CD4-positive, alpha-beta memory T cell (primary cell): ENCODE measurements at regions of chr12 and their contacts with region 1.

Region 1: DNA sequence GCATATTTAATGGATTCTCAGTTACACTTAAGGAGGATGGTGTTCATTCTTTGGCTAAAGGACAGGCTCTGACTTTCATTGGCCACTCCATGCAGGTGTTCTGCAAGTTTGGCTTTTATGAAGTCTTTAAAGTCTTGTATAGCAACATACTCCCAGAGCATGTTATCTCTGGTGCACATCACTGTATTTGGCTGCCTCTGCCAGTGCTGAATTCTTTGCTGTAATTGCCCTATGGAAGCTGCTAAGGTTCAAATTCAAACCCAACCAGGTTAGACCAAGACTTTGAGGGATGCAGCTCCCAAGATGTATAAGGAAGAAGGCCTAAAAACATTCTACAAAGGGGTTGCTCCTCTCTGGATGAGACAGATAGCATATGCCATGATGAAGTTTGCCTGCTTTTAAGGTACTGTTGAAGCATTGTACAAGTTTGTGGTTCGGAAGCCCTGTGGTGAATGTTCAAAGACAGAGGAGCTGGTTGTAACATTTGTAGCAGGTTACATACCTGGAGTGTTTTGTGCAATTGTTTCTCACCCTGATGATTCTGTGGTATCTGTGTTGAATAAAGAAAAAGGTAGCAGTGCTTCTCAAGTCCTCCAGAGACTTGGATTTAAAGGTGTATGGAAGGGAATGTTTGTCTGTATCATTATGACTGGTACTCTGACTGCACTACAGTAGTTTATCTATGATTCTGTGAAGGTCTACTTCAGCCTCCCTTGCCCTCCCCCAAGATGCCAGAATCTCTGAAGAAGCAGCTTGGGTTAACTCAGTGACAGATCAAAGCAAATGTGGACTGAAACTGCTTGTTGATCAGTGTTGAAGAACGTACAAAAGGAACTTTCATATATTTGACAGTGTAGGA is 19.4 kb downstream of the TMEM116 start:
- DNase-seq: peak; percentile 63 to 71 (median 67)
- H3K4me3 ChIP-seq: peak overlapping the region in 1 of 2 donors; percentile 55
- H3K4me3 Mint-ChIP-seq: peak overlapping the region; percentile 87 to 96 (median 92)
- H3K27ac ChIP-seq: peak overlapping the region; percentile 52
- H3K27ac Mint-ChIP-seq: peak overlapping the region; percentile 80 to 97 (median 92)
- H3K4me1 ChIP-seq: peaks cover 83% of the 10 kb centered on the region
- H3K4me1 Mint-ChIP-seq: peaks cover 50 to 88% (median 66%) of the 10 kb centered on the region in 4 donors
- H3K27me3 ChIP-seq: no peaks in the 10 kb centered on the region
- H3K27me3 Mint-ChIP-seq: no peaks in the 10 kb centered on the region

Region 2: DNA sequence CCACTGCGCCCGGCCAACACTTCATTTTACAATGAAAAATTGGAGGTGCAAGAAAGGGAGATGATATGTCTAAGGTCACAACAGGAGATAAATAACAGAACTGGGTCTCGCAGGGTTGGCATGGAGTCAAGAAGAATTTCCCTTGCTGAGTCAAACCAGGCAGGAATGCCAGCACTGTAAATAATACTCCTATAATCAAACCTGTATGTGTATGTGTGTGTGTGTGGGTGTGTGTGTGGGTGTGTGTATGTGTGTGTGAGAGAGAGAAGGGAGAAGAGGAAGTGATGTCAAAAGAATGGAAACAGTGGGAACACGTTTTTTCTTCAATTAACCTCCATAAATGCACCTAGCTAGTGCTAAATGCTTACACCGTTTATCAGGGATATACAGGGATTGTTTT is 51.0 kb before region 1 on chr12:
- CTCF ChIA-PET with region 1: interaction called, 6 read pairs
- POLR2A ChIA-PET with region 1: interaction called, 3 read pairs
- intact Hi-C with region 1: loop called (anchors 1 kb)
- DNase-seq: no peak
- H3K4me3 ChIP-seq: no peak overlapping the region
- H3K4me3 Mint-ChIP-seq: no peak overlapping the region
- H3K27ac ChIP-seq: no peak overlapping the region
- H3K27ac Mint-ChIP-seq: peak overlapping the region in 1 of 7 donors; percentile 46
- H3K4me1 ChIP-seq: peaks cover 16% of the 10 kb centered on the region
- H3K4me1 Mint-ChIP-seq: peaks cover 8 to 17% (median 11%) of the 10 kb centered on the region in 4 donors
- H3K27me3 ChIP-seq: no peaks in the 10 kb centered on the region
- H3K27me3 Mint-ChIP-seq: no peaks in the 10 kb centered on the region

Region 3: DNA sequence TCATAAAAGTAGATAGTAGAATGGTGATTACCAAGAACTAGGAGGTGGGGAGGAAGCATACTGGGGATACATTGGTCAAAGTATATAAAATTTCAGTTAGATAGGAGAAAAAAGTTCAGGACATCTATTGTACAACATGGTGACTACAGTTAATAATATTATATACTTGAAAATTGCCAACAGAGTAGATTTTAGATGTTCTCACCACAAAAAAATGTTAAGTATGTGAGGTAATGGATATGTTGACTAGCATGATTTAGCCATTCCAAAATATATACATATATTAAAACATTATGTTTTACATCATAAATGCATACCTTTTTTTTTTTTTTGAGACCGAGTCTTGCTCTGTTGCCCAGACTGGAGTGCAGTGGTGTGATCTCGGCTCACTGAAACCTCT is 11.5 kb before region 1 on chr12:
- CTCF ChIA-PET with region 1: interaction called, 3 read pairs
- POLR2A ChIA-PET with region 1: interaction called, 16 read pairs
- intact Hi-C with region 1: no loop called
- DNase-seq: no peak
- H3K4me3 ChIP-seq: no peak overlapping the region
- H3K4me3 Mint-ChIP-seq: peak overlapping the region in 1 of 8 donors; percentile 9
- H3K27ac ChIP-seq: no peak overlapping the region
- H3K27ac Mint-ChIP-seq: peak overlapping the region in 1 of 7 donors; percentile 12
- H3K4me1 ChIP-seq: peaks cover 1% of the 10 kb centered on the region
- H3K4me1 Mint-ChIP-seq: peaks cover 19 to 51% (median 37%) of the 10 kb centered on the region in 4 donors
- H3K27me3 ChIP-seq: no peaks in the 10 kb centered on the region
- H3K27me3 Mint-ChIP-seq: no peaks in the 10 kb centered on the region

Region 4: GRCh38 chr12:112005419-112006395 is 12.2 kb after region 1 on chr12:
- CTCF ChIA-PET with region 1: interaction called, 20 read pairs
- POLR2A ChIA-PET with region 1: interaction called, 344 read pairs
- intact Hi-C with region 1: loop called (anchors 1 kb)
- DNase-seq: no peak
- H3K4me3 ChIP-seq: no peak overlapping the region
- H3K4me3 Mint-ChIP-seq: peak overlapping the region in 4 of 8 donors; percentile 8 to 41 (median 36)
- H3K27ac ChIP-seq: no peak overlapping the region
- H3K27ac Mint-ChIP-seq: peak overlapping the region; percentile 10 to 85 (median 69)
- H3K4me1 ChIP-seq: peaks cover 87% of the 10 kb centered on the region
- H3K4me1 Mint-ChIP-seq: peaks cover 36 to 65% (median 50%) of the 10 kb centered on the region in 4 donors
- H3K27me3 ChIP-seq: no peaks in the 10 kb centered on the region
- H3K27me3 Mint-ChIP-seq: no peaks in the 10 kb centered on the region